Caco-2 (cell line): ENCODE measurements at regions of chr3 and their contacts with region 1.

Region 1: GRCh38 chr3:135895106-135895733 is 70.3 kb upstream of the PPP2R3A start:
- DNase-seq: peak; percentile 63 to 73
- H3K4me3 ChIP-seq: no peak overlapping the region
- H3K4me3 Mint-ChIP-seq: no peak overlapping the region
- H3K27ac Mint-ChIP-seq: no peak overlapping the region
- H3K4me1 ChIP-seq: peaks cover 16% of the 10 kb centered on the region
- H3K4me1 Mint-ChIP-seq: peaks cover 24% of the 10 kb centered on the region
- H3K27me3 ChIP-seq: no peaks in the 10 kb centered on the region
- H3K27me3 Mint-ChIP-seq: peaks cover 7% of the 10 kb centered on the region
- CTCF ChIP-seq: peak; percentile 62 to 84

Region 2: GRCh38 chr3:135503760-135504686 is 391.2 kb before region 1 on chr3:
- CTCF ChIA-PET with region 1: no interaction called
- POLR2A ChIA-PET with region 1: no interaction called
- intact Hi-C with region 1: loop called (anchors 5 kb)
- DNase-seq: peak; percentile 71 to 78
- H3K4me3 ChIP-seq: no peak overlapping the region
- H3K4me3 Mint-ChIP-seq: no peak overlapping the region
- H3K27ac Mint-ChIP-seq: no peak overlapping the region
- H3K4me1 ChIP-seq: no peaks in the 10 kb centered on the region
- H3K4me1 Mint-ChIP-seq: no peaks in the 10 kb centered on the region
- H3K27me3 ChIP-seq: no peaks in the 10 kb centered on the region
- H3K27me3 Mint-ChIP-seq: peaks cover 17% of the 10 kb centered on the region
- CTCF ChIP-seq: peak; percentile 46 to 85

Region 3: DNA sequence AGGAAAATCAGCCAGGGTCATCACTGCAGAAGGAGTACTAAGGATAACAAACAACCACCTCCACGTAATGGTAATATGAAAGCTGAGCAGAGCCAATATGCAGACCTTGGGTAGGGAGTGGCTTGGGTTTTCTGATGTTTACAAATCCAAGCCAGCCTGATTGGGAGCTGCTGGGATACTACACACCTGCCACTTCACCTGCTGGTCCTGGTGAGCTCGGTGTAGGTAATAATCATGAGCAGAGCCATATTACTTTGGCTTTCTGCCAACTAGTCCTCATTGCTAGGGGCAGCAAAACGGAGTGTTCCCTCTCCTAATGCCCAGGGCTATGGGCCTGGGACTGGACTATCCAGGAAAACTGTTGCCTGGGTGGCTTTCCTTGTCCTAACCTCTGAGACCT is 363.2 kb before region 1 on chr3:
- CTCF ChIA-PET with region 1: no interaction called
- POLR2A ChIA-PET with region 1: no interaction called
- intact Hi-C with region 1: loop called (anchors 10 kb)
- DNase-seq: no peak
- H3K4me3 ChIP-seq: no peak overlapping the region
- H3K4me3 Mint-ChIP-seq: no peak overlapping the region
- H3K27ac Mint-ChIP-seq: no peak overlapping the region
- H3K4me1 ChIP-seq: no peaks in the 10 kb centered on the region
- H3K4me1 Mint-ChIP-seq: no peaks in the 10 kb centered on the region
- H3K27me3 ChIP-seq: no peaks in the 10 kb centered on the region
- H3K27me3 Mint-ChIP-seq: peaks cover 21% of the 10 kb centered on the region
- CTCF ChIP-seq: no peak

Region 4: GRCh38 chr3:135736740-135737139 is 158.5 kb before region 1 on chr3:
- CTCF ChIA-PET with region 1: no interaction called
- POLR2A ChIA-PET with region 1: no interaction called
- intact Hi-C with region 1: loop called (anchors 10 kb)
- DNase-seq: peak in 1 of 2 experiments; percentile 4
- H3K4me3 ChIP-seq: no peak overlapping the region
- H3K4me3 Mint-ChIP-seq: no peak overlapping the region
- H3K27ac Mint-ChIP-seq: no peak overlapping the region
- H3K4me1 ChIP-seq: no peaks in the 10 kb centered on the region
- H3K4me1 Mint-ChIP-seq: no peaks in the 10 kb centered on the region
- H3K27me3 ChIP-seq: no peaks in the 10 kb centered on the region
- H3K27me3 Mint-ChIP-seq: peaks cover 28% of the 10 kb centered on the region
- CTCF ChIP-seq: peak in 1 of 2 experiments; percentile 12

Region 5: DNA sequence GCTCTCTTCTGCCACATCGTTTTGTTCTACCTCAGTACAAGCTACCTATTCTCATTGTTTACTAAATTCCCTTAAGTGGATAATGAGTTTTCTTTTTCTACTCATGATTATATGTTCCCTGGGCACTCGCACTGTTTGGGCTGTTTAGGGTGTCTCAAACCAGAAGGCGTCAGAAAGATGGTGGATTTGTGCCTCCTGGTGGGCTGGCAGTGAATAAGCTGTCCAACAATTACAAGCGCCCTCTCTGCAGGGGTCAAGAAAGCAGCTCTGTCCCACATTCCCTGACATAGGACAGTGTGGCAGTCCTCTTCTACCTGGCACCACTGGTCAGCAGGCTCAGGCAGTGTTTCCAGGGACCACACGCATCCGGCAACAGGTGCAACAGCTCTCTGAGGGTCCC is 103.0 kb before region 1 on chr3:
- CTCF ChIA-PET with region 1: no interaction called
- POLR2A ChIA-PET with region 1: no interaction called
- intact Hi-C with region 1: loop called (anchors 10 kb)
- DNase-seq: peak in 1 of 2 experiments; percentile 8
- H3K4me3 ChIP-seq: no peak overlapping the region
- H3K4me3 Mint-ChIP-seq: no peak overlapping the region
- H3K27ac Mint-ChIP-seq: no peak overlapping the region
- H3K4me1 ChIP-seq: no peaks in the 10 kb centered on the region
- H3K4me1 Mint-ChIP-seq: no peaks in the 10 kb centered on the region
- H3K27me3 ChIP-seq: no peaks in the 10 kb centered on the region
- H3K27me3 Mint-ChIP-seq: peaks cover 6% of the 10 kb centered on the region
- CTCF ChIP-seq: peak in 1 of 2 experiments; percentile 4